Activated T-helper 2 cell treated with anti-CD3 and anti-CD28 coated beads, Interferon-gamma antibody, Interleukin-2, Interleukin-4, amounts not matched to agents 10 μg/mL and 5 μg/mL and 100 μg/mL, durations not matched to agents 14 hours and 24 hours and 36 hours (primary cell): ENCODE measurements at regions of chr12 and their contacts with region 1.

Region 1: GRCh38 chr12:110563702-110564640 is 19.1 kb downstream of the PPTC7 start:
- DNase-seq: no peak
- H3K4me3 Mint-ChIP-seq: peak overlapping the region; percentile 37
- H3K27ac Mint-ChIP-seq: peak overlapping the region; percentile 77
- H3K4me1 Mint-ChIP-seq: peaks cover 51% of the 10 kb centered on the region
- H3K27me3 Mint-ChIP-seq: no peaks in the 10 kb centered on the region

Region 2: DNA sequence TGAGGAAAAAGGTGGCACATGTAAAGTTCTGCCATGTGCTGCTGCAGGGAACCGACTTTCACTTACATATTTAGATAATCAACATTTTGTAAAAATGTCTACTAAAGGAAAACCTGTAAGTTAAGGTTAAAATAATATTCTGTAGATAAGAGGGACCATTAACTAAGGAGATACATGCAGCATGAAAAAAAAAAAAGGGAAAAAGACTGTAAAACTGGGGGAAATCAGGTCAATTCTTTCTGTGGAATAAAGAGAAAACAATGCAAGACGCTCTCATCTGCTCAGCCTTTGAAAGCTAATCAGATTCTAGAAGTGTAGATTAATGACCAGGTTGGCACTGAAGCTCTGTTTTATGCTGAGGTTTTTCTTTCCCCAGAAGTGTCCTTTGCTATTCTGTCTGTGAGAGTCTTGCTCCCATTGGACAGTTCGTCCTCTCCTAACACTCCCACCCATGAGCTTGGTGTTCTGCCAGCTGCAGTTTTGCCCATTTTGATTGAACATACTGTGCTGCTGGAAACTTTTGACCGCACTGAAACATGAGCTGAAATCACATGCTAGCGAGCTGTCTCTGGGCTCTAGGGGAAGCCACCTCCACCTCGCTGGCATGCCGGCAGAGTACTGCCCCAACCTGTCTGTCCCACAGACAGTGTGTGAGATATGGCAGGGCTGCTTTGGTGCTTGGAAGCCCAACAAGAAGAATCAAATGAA is 20.6 kb before region 1 on chr12:
- intact Hi-C with region 1: loop called (anchors 2 kb)
- DNase-seq: no peak
- H3K4me3 Mint-ChIP-seq: no peak overlapping the region
- H3K27ac Mint-ChIP-seq: peak overlapping the region; percentile 62
- H3K4me1 Mint-ChIP-seq: peaks cover 30% of the 10 kb centered on the region
- H3K27me3 Mint-ChIP-seq: no peaks in the 10 kb centered on the region